A549 (cell line): ENCODE measurements at regions of chr13 and their contacts with region 1.

Region 1: GRCh38 chr13:39144941-39145533 is 106.8 kb downstream of the NHLRC3 start:
- DNase-seq: peak; percentile 25 to 52
- ATAC-seq: peak; percentile 54 to 71; a peak in 4 of 6 replicates
- H3K4me3 ChIP-seq: no peak overlapping the region
- H3K27ac ChIP-seq: no peak overlapping the region
- H3K4me1 ChIP-seq: no peaks in the 10 kb centered on the region
- CTCF ChIP-seq: peak; percentile 47
- EP300 ChIP-seq: no peak
- POLR2A ChIP-seq: no peak
- RAD21 ChIP-seq: peak; percentile 59 to 65

Region 2: GRCh38 chr13:39119422-39119821 is 25.6 kb before region 1 on chr13:
- CTCF ChIA-PET with region 1: no interaction called
- POLR2A ChIA-PET with region 1: no interaction called
- DNase-seq: no peak
- ATAC-seq: no peak
- H3K4me3 ChIP-seq: no peak overlapping the region
- H3K27ac ChIP-seq: no peak overlapping the region
- H3K4me1 ChIP-seq: no peaks in the 10 kb centered on the region
- CTCF ChIP-seq: no peak
- EP300 ChIP-seq: no peak
- POLR2A ChIP-seq: no peak
- RAD21 ChIP-seq: no peak

Region 3: GRCh38 chr13:39604756-39605155 is 459.7 kb after region 1 on chr13:
- CTCF ChIA-PET with region 1: interaction called, 47 read pairs
- POLR2A ChIA-PET with region 1: no interaction called
- DNase-seq: no peak
- ATAC-seq: no peak
- H3K4me3 ChIP-seq: no peak overlapping the region
- H3K27ac ChIP-seq: no peak overlapping the region
- H3K4me1 ChIP-seq: no peaks in the 10 kb centered on the region
- CTCF ChIP-seq: no peak
- EP300 ChIP-seq: no peak
- POLR2A ChIP-seq: no peak
- RAD21 ChIP-seq: no peak